Ascending aorta (tissue), 2 donors: ENCODE measurements at regions of chr16 and their contacts with region 1.

Region 1: DNA sequence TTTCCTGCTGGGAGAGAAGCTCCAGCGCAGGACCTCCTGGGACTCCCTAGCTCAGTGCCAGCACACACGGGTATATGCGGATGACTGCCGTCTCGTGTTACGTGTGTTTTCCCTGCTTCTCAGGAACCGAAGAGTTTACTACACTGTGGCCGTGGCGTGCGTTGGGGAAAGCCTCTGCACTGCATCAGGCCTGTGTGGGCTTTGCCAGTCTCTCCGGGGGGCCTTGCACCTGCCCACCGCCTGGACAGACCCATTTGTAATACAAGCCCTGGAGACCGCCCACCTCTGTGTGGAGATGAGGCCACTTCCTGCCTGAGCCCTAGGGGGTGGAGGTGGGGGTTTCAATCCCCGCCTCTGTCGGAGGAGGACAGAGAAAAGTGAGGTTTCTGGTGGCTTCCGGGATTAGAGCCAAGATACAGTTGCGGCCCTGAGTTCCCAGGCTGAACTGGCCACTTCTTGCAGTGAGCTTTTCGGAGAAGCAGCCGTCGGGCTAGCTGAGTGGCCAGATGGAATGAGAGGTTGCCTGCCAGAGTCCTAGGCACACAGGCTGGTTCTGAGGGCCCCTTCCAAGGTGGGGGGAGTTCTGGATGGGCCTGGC is 43.4 kb upstream of the GSE1 start:
- DNase-seq: no peak
- H3K4me3 ChIP-seq: no peak overlapping the region
- H3K27ac ChIP-seq: peak overlapping the region in 1 of 2 donors; percentile 27
- H3K4me1 ChIP-seq: peaks cover 9 to 12% of the 10 kb centered on the region in 2 donors
- H3K27me3 ChIP-seq: no peaks in the 10 kb centered on the region
- CTCF ChIP-seq: no peak

Region 2: GRCh38 chr16:85514595-85515318 is 55.0 kb before region 1 on chr16:
- intact Hi-C with region 1: loop called (anchors 5 kb)
- DNase-seq: peak; percentile 35 to 93
- H3K4me3 ChIP-seq: peak overlapping the region in 1 of 2 donors; percentile 25
- H3K27ac ChIP-seq: peak overlapping the region; percentile 81 to 88
- H3K4me1 ChIP-seq: peaks cover 7 to 26% of the 10 kb centered on the region in 2 donors
- H3K27me3 ChIP-seq: no peaks in the 10 kb centered on the region
- CTCF ChIP-seq: peak in 2 of 3 experiments; percentile 22 to 25

Region 3: GRCh38 chr16:85688586-85689284 is 119.0 kb after region 1 on chr16 and contains the start of gene GINS2:
- intact Hi-C with region 1: no loop called
- DNase-seq: peak; percentile 67 to 93
- H3K4me3 ChIP-seq: peak within 1 kb of the TSS; percentile 73 to 78
- H3K27ac ChIP-seq: no peak within 1 kb of the TSS
- H3K4me1 ChIP-seq: peaks cover 0 to 6% of the 10 kb centered on the region in 2 donors
- H3K27me3 ChIP-seq: no peaks in the 10 kb centered on the region
- CTCF ChIP-seq: no peak
- total RNA-seq, gene GINS2: not detected